Caki2 (cell line): ENCODE measurements at regions of chr2 and their contacts with region 1.

Region 1: GRCh38 chr2:135494503-135494902 is 36.5 kb downstream of the ZRANB3 start:
- DNase-seq: no peak

Region 2: DNA sequence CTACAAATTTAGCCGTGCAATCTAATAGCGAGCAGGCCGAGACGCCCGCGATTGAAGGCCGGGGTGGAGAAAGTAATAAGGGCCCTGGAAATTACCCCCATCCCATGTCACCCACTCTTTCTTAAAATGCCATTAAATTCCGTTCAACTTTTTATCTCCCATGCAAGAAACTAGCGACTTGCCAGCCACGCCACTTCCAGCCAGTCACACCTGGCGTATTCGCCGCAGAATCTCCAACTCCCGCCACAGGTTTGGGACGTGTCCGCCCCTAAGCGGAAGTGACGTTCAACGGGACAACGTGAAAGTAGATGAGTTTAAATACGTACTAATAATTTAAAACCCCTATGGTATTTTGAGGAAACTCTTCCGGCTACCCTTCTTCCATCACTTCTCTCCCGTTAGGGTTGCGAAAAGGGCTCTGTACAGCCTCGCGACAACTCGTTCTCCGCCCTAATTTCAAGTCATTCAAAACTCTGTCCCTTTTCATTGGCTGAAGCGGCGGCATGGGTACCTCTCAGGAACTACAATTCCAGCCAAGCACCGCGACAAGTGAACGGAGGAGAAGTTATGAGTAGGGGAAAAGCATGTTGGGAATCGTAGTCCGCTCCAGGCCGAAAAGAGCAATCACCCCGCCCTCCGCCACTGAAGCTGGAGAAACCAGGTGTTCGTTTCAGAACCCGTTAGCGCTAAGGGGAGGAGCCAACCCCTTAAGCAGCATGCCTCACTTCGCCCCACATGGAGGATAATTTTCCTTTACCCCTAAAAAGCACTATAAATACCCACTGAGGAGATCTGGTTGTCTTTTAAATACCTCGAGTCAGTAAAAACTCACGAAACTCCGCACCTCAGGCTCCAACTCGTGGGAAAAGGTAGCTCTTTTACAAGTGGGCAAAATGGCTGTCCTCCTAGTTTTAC is 36.1 kb after region 1 on chr2 and contains the start of gene ZRANB3:
- in situ Hi-C with region 1: no loop called
- DNase-seq: peak; percentile 98
- total RNA-seq, gene ZRANB3: 1.6 and 6.1 TPM in 2 replicates

Region 3: GRCh38 chr2:135585586-135585985 is 91.1 kb after region 1 on chr2:
- in situ Hi-C with region 1: loop called (anchors 10 kb)
- DNase-seq: no peak